ENCODE measurements at regions of chr1 and their contacts with region 1.

Region 1: GRCh38 chr1:9942939-9943788 is at the starts of genes LZIC and NMNAT1:
- DNase-seq: peak; percentile 95 to 97
- ATAC-seq: peak; percentile 99
- H3K4me3 ChIP-seq: peak within 1 kb of the TSS; percentile 75 to 83
- H3K27ac ChIP-seq: peak within 1 kb of the TSS; percentile 32 to 71
- H3K4me1 ChIP-seq: no peaks in the 10 kb centered on the region
- H3K27me3 ChIP-seq: no peaks in the 10 kb centered on the region
- total RNA-seq, gene LZIC: 25.8 to 30.7 TPM
- total RNA-seq, gene NMNAT1: 5.7 to 11.2 TPM

Region 2: GRCh38 chr1:9441451-9442133 is 501.6 kb before region 1 on chr1:
- intact Hi-C with region 1: no loop called
- DNase-seq: peak; percentile 78 to 87
- ATAC-seq: peak; percentile 30
- H3K4me3 ChIP-seq: no peak overlapping the region
- H3K27ac ChIP-seq: peak overlapping the region; percentile 37 to 89
- H3K4me1 ChIP-seq: peaks cover 0 to 6% of the 10 kb centered on the region in 2 donors
- H3K27me3 ChIP-seq: no peaks in the 10 kb centered on the region

Region 3: GRCh38 chr1:9874959-9875635 is 68.1 kb before region 1 on chr1:
- intact Hi-C with region 1: loop called (anchors 1 to 5 kb)
- DNase-seq: peak; percentile 75 to 89
- ATAC-seq: peak; percentile 89
- H3K4me3 ChIP-seq: no peak overlapping the region
- H3K27ac ChIP-seq: peak overlapping the region in 1 of 2 donors; percentile 14
- H3K4me1 ChIP-seq: peaks cover 0 to 2% of the 10 kb centered on the region in 2 donors
- H3K27me3 ChIP-seq: no peaks in the 10 kb centered on the region

Region 4: DNA sequence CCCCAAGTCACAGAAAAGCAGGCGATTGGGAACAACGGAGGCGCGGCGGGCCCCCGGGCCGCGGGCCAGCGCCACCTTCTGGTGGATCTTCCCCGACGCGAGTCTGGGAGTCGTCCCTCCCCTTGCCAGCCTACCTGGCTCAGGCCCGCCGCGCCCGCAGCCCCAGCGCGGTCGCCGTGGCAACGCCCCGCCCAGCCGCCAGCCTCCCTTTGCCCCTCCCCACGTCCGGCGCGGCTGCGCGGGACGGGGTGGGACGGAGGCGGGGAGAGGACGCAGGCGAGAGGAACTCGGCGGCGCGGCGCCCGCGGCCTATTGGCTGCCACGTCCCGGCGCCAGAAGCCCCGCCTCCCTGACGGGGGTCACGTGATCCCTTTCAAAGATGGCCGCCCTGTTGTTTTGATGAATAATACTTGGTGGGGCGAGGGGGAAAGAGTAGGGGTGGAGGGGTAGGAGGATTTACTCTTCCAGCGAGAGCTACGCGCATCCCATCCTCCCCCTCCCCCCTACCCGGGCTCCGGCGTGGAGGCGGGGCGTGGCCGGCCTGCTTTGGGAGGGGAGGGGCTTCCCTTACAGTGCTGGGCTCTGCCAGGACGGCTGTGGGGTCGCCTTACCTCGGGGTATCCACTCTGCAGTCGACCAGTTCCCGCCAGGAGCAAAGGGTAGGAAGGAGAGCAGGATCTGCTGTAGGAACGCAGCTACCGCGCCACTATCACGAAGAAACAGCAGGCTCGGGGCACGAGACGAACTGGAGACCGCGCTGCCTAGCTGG is 89.6 kb after region 1 on chr1 and contains the start of gene UBE4B:
- intact Hi-C with region 1: loop called in 1 of 2 experiments (anchors 5 kb)
- DNase-seq: peak; percentile 99
- ATAC-seq: peak; percentile 100
- H3K4me3 ChIP-seq: peak within 1 kb of the TSS; percentile 55 to 89
- H3K27ac ChIP-seq: peak within 1 kb of the TSS; percentile 37 to 77
- H3K4me1 ChIP-seq: no peaks in the 10 kb centered on the region
- H3K27me3 ChIP-seq: no peaks in the 10 kb centered on the region
- total RNA-seq, gene UBE4B: 46.9 to 54.8 TPM

Region 5: GRCh38 chr1:10128101-10128765 is 185.1 kb after region 1 on chr1:
- intact Hi-C with region 1: loop called in 1 of 2 experiments (anchors 10 kb)
- DNase-seq: no peak
- ATAC-seq: no peak
- H3K4me3 ChIP-seq: no peak overlapping the region
- H3K27ac ChIP-seq: peak overlapping the region; percentile 26 to 79
- H3K4me1 ChIP-seq: peaks cover 0 to 4% of the 10 kb centered on the region in 2 donors
- H3K27me3 ChIP-seq: no peaks in the 10 kb centered on the region

Region 6: GRCh38 chr1:10152709-10153284 is 209.6 kb after region 1 on chr1:
- intact Hi-C with region 1: loop called in 1 of 2 experiments (anchors 5 kb)
- DNase-seq: peak; percentile 70 to 83
- ATAC-seq: peak; percentile 80
- H3K4me3 ChIP-seq: no peak overlapping the region
- H3K27ac ChIP-seq: peak overlapping the region in 1 of 2 donors; percentile 11
- H3K4me1 ChIP-seq: no peaks in the 10 kb centered on the region
- H3K27me3 ChIP-seq: no peaks in the 10 kb centered on the region

Region 7: GRCh38 chr1:10283318-10283984 is 340.3 kb after region 1 on chr1:
- intact Hi-C with region 1: loop called in 1 of 2 experiments (anchors 10 kb)
- DNase-seq: no peak
- ATAC-seq: no peak
- H3K4me3 ChIP-seq: no peak overlapping the region
- H3K27ac ChIP-seq: no peak overlapping the region
- H3K4me1 ChIP-seq: peaks cover 8% of the 10 kb centered on the region in 2 donors
- H3K27me3 ChIP-seq: no peaks in the 10 kb centered on the region

Region 8: GRCh38 chr1:10430216-10431069 is 487.3 kb after region 1 on chr1 and contains the start of gene CENPS:
- intact Hi-C with region 1: loop called in 1 of 2 experiments (anchors 10 kb)
- DNase-seq: peak; percentile 96 to 98
- ATAC-seq: peak; percentile 99
- H3K4me3 ChIP-seq: peak within 1 kb of the TSS; percentile 38 to 46
- H3K27ac ChIP-seq: no peak within 1 kb of the TSS
- H3K4me1 ChIP-seq: no peaks in the 10 kb centered on the region
- H3K27me3 ChIP-seq: no peaks in the 10 kb centered on the region
- total RNA-seq, gene CENPS: 4.3 to 11.4 TPM

Measured in aorta (tissue), 5 donors.